Activated CD8-positive, alpha-beta T cell treated with anti-CD3 and anti-CD28 coated beads for 36 hours (primary cell): ENCODE measurements at regions of chr12 and their contacts with region 1.

Region 1: GRCh38 chr12:19833775-19834501 is 394.6 kb downstream of the AEBP2 start:
- DNase-seq: peak; percentile 56
- ATAC-seq: peak; percentile 93
- H3K4me3 Mint-ChIP-seq: no peak overlapping the region
- H3K27ac Mint-ChIP-seq: peak overlapping the region; percentile 74
- H3K4me1 Mint-ChIP-seq: peaks cover 31% of the 10 kb centered on the region
- H3K27me3 Mint-ChIP-seq: no peaks in the 10 kb centered on the region
- CTCF ChIP-seq: peak; percentile 24

Region 2: DNA sequence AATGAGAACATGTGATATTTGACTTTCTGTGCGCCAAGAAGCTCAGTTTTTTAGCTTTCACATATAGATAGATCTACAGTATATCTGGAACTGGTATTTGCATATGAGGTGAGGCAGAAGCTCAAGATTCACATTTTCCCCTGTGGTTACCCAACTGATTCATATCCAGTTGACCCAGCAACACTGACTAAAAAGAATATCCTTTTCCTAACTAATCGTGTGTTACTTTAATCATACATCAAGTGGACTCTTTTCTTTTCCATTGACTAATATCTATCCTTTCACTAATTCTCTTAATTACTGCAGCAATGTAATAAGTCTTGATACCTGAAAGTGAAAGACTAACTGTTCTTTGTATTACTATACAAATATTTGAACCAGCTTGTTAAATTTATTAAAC is 158.6 kb before region 1 on chr12:
- CTCF ChIA-PET with region 1: no interaction called
- POLR2A ChIA-PET with region 1: no interaction called
- intact Hi-C with region 1: loop called (anchors 5 kb)
- DNase-seq: peak; percentile 36
- ATAC-seq: peak; percentile 95
- H3K4me3 Mint-ChIP-seq: no peak overlapping the region
- H3K27ac Mint-ChIP-seq: peak overlapping the region; percentile 87
- H3K4me1 Mint-ChIP-seq: peaks cover 51% of the 10 kb centered on the region
- H3K27me3 Mint-ChIP-seq: no peaks in the 10 kb centered on the region
- CTCF ChIP-seq: no peak

Region 3: DNA sequence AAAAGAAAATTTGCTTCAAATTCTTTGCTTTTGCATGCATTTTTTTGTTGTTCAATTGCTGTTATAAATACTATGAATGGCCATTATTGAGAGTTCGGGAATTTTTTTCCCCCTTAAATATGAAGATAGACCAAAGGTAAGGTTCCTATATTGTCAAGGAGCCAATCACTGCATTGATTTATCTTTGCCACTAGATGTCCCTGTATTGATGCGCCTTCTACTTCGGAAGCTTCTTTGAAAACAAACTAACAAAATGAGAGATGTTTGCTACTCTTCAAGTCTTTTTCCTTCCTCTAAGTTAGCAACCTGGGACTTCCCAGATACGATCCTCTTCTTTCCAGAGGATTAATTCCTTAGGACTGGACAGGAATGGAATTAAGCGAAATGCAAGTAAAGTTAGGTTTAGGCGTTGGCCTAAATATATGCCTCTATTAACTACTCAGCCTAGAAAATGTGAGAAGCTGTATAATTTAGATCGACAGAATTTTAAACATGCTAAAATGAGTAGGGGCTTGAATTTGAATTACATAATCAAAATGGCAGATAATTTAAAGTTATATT is 76.5 kb before region 1 on chr12:
- CTCF ChIA-PET with region 1: interaction called, 5 read pairs
- POLR2A ChIA-PET with region 1: no interaction called
- intact Hi-C with region 1: loop called (anchors 5 kb)
- DNase-seq: no peak
- ATAC-seq: peak; percentile 60
- H3K4me3 Mint-ChIP-seq: no peak overlapping the region
- H3K27ac Mint-ChIP-seq: no peak overlapping the region
- H3K4me1 Mint-ChIP-seq: peaks cover 7% of the 10 kb centered on the region
- H3K27me3 Mint-ChIP-seq: no peaks in the 10 kb centered on the region
- CTCF ChIP-seq: peak; percentile 75

Region 4: DNA sequence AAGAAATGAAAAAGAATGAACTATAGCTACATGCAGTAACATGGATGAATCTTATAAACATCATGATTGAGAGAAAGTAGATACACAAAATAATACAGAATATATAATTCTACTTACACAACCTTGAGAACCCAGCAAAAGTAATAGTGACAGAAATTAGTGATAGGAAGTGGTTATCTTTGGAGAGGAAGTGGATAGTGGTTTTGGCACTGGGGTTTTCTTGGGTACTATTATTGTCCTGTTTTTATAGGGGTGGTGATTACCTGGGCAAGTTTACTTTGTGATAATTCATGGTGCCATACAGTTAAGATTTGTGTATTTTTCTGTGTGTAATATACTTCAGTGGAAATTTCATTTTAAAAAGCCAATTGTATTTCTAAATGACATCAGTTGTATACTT is 41.9 kb before region 1 on chr12:
- CTCF ChIA-PET with region 1: no interaction called
- POLR2A ChIA-PET with region 1: no interaction called
- intact Hi-C with region 1: loop called (anchors 5 kb)
- DNase-seq: peak; percentile 22
- ATAC-seq: peak; percentile 62
- H3K4me3 Mint-ChIP-seq: no peak overlapping the region
- H3K27ac Mint-ChIP-seq: no peak overlapping the region
- H3K4me1 Mint-ChIP-seq: peaks cover 35% of the 10 kb centered on the region
- H3K27me3 Mint-ChIP-seq: no peaks in the 10 kb centered on the region
- CTCF ChIP-seq: no peak

Region 5: DNA sequence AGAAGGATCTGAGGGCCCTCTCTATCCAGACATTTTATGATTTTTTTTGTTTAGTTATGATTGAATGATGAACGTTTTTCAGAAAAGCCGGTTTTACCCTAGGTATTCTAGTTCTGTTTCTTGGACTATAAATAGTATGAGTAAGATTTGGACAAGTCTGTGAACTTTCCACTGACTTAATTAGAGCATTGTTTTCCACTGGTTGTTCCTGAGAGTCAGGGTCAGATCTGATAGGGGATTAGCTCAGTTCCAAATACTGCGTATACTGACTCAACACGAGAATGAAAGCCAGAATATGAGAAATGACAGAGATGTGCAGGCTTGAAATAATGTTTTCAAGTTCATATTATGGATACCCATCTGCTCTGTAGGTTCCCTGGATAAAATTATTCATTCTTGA is 33.1 kb before region 1 on chr12:
- CTCF ChIA-PET with region 1: no interaction called
- POLR2A ChIA-PET with region 1: no interaction called
- intact Hi-C with region 1: loop called (anchors 2 kb)
- DNase-seq: no peak
- ATAC-seq: peak; percentile 90
- H3K4me3 Mint-ChIP-seq: no peak overlapping the region
- H3K27ac Mint-ChIP-seq: peak overlapping the region; percentile 85
- H3K4me1 Mint-ChIP-seq: peaks cover 40% of the 10 kb centered on the region
- H3K27me3 Mint-ChIP-seq: no peaks in the 10 kb centered on the region
- CTCF ChIP-seq: no peak